ENCODE measurements at regions of chr2 and their contacts with region 1.

Region 1: DNA sequence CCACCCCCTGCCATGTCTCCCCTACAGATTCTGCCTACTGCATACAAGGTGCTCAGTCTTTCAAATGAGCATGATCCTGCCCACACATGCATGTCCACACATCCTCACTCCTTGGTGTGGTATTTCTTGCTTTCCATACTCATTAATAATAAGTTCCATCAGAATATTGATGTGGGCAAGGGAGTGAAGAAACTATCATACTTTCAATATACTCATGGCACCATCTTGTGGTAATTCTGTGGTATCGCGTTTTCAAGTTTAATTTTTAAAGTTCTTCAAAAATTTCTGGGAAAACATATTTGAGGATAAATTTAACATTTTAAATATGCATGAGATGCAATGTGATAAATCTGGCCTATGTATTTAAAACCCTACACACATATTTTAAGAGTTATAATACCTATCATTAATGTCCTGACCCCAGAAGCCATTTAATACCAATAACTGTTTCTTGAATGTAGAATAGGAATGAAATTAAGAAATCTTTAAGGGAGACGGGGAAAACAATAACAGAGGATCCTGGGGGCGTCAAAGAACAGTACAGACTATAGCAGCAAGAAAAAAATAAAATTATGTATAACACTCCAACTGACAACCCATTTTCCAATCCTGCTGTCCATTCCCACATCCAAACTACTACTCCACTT is 110.1 kb downstream of the ZNF385B start:
- DNase-seq: peak; percentile 18
- ATAC-seq: 0 out of 2 replicates have a peak, but pooled peaks have one; percentile 46
- H3K4me3 ChIP-seq: no peak overlapping the region
- H3K27ac ChIP-seq: no peak overlapping the region
- H3K4me1 ChIP-seq: no peaks in the 10 kb centered on the region
- H3K27me3 ChIP-seq: no peaks in the 10 kb centered on the region
- CTCF ChIP-seq: peak; percentile 42 to 82 (median 78); a peak in 5 of 6 replicates
- POLR2A ChIP-seq: no peak
- RAD21 ChIP-seq: peak; percentile 88

Region 2: DNA sequence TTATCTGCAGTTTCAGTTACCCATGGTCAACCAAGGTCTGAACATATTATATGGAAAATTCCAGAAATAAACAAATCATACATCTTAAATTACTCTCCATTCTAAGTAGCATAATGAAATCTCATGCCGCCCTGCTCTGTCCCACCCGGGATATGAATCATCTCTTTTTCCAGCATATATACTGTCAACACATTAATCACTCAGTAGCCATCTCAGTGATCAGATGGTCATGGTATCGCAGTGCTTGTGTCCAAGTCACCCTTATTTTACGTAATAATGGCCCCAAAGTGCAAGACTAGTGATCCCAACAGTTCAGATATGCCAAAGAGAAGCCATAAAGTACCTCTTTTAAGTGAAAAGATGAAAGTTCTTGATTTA is 1513.2 kb before region 1 on chr2:
- CTCF ChIA-PET with region 1: no interaction called
- POLR2A ChIA-PET with region 1: no interaction called
- RAD21 ChIA-PET with region 1: no interaction called
- intact Hi-C with region 1: no loop called
- DNase-seq: no peak
- ATAC-seq: no peak
- H3K4me3 ChIP-seq: no peak overlapping the region
- H3K27ac ChIP-seq: no peak overlapping the region
- H3K4me1 ChIP-seq: peaks cover 5 to 10% of the 10 kb centered on the region in 2 experiments; a peak in 3 of 4 replicates
- H3K27me3 ChIP-seq: no peaks in the 10 kb centered on the region
- CTCF ChIP-seq: no peak
- POLR2A ChIP-seq: no peak
- RAD21 ChIP-seq: no peak

Region 3: GRCh38 chr2:178761759-178762371 is 989.4 kb before region 1 on chr2:
- CTCF ChIA-PET with region 1: no interaction called
- POLR2A ChIA-PET with region 1: no interaction called
- RAD21 ChIA-PET with region 1: no interaction called
- intact Hi-C with region 1: loop called (anchors 10 kb)
- DNase-seq: peak; percentile 42
- ATAC-seq: peak; percentile 76
- H3K4me3 ChIP-seq: no peak overlapping the region
- H3K27ac ChIP-seq: no peak overlapping the region
- H3K4me1 ChIP-seq: no peaks in the 10 kb centered on the region
- H3K27me3 ChIP-seq: peaks cover 35% of the 10 kb centered on the region; the same call in 1 of the 2 replicates
- CTCF ChIP-seq: peak; percentile 63 to 81 (median 66); a peak in 5 of 6 replicates
- POLR2A ChIP-seq: no peak
- RAD21 ChIP-seq: peak; percentile 87

Region 4: DNA sequence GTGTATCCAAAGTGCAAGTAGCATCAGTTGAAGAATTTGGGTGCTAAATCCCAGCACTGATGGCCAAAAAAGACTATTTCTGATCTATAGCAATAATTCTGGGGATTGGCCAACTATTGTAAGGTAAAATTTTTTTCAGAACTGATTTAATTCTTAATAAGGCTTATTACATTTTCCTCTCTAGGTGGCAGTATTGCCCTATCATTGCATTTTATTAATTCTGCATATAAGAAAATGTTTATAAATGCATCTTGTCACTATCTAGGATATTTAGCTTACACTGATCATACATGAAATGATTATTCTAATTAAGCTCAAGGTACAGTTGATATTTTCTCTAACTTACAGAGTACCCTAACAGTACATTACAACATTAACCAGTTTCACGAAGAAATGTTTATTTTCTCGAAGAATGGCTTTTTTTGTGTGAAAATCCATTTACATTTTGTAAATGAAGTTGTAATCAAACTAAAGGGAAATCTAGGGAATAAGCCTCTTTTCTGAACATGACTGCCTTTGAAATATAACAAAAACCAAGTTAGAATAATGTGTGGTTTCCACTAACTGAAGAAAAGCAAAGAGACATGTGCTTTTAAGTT is 955.1 kb before region 1 on chr2:
- CTCF ChIA-PET with region 1: no interaction called
- POLR2A ChIA-PET with region 1: no interaction called
- RAD21 ChIA-PET with region 1: no interaction called
- intact Hi-C with region 1: loop called (anchors 1 kb)
- DNase-seq: peak; percentile 22
- ATAC-seq: no peak
- H3K4me3 ChIP-seq: no peak overlapping the region
- H3K27ac ChIP-seq: no peak overlapping the region
- H3K4me1 ChIP-seq: no peaks in the 10 kb centered on the region
- H3K27me3 ChIP-seq: 0 out of 2 replicates have a peak, but pooled peaks cover 5% of the 10 kb centered on the region
- CTCF ChIP-seq: peak; percentile 29 to 73 (median 70); a peak in 5 of 6 replicates
- POLR2A ChIP-seq: no peak
- RAD21 ChIP-seq: peak; percentile 85

Region 5: DNA sequence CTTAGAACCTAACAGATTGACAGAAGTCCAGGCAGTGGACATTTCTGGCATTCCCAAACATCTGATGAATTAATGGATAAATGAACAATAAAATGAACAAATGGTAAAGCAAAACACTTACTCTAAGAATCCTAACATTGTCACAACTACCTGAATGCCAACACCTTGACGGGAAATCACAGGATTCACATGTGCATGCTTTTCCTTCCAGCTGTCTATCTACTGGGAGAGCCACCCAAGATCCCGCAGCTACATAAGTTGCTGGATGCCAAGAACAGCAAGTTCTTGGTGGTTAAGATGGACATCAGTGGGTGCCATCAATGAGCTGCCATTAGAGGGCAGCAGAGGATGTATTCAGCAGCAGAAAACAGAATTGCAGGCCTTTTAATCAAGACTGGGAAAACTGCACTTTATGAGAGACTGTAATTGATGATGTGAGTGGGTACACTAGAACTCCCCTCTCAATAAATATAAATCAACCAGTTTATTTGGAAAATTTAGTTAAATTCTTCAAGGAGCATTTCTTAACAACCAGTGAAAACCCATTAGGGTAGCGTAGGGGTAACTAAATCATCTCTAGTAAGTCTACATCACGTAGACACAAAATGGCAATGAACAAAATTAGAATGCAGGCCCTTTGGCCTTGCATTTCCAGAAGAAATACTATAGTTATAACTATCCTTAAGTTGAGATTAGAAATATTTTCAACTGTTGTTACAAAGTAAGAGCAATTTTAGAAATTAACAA is 532.3 kb before region 1 on chr2:
- CTCF ChIA-PET with region 1: no interaction called
- POLR2A ChIA-PET with region 1: no interaction called
- RAD21 ChIA-PET with region 1: no interaction called
- intact Hi-C with region 1: loop called (anchors 2 kb)
- DNase-seq: peak; percentile 67
- ATAC-seq: peak; percentile 91
- H3K4me3 ChIP-seq: no peak overlapping the region
- H3K27ac ChIP-seq: no peak overlapping the region
- H3K4me1 ChIP-seq: peaks cover 0 to 3% of the 10 kb centered on the region in 2 experiments; a peak in 1 of 4 replicates
- H3K27me3 ChIP-seq: no peaks in the 10 kb centered on the region
- CTCF ChIP-seq: peak; percentile 77 to 91 (median 90)
- POLR2A ChIP-seq: no peak
- RAD21 ChIP-seq: peak; percentile 91

Region 6: DNA sequence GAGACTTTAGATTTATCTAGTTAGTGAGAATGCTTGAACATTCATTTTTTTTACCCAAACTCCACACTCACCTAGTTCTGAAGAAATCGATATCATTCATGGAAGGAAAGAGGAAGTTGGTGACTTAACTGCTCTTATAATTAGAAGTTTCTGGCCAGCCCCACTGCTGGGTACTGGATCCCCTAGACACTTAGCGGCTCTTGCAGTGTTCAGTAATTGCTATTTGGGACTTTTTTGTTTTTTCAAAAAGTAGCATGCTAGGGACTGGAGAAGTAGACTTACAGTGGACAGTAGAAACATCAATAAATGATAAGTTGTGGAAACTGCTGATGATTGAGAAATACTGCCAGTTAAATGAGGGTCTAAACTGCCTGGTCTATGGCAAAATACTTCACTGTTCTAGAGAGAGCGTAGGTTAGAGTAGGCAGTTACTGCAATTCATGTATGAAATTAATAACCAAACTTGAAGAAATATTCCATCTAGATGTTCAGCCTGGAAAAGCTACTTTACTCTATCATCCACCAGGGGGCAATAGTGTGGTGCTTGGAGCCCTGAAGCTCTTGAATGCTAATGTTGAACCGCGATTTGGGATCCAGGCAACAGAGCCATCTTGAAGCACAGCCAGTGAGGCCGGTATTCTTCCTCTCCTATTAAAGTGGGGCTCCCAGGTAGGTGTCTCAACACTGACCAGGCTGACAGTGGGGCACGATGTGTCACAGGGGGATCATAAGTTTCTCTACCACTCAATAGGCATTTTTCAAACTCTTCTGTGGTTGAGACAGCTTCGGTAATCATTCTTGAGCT is 340.5 kb before region 1 on chr2:
- CTCF ChIA-PET with region 1: interaction called, 6 read pairs
- POLR2A ChIA-PET with region 1: no interaction called
- RAD21 ChIA-PET with region 1: no interaction called
- intact Hi-C with region 1: loop called (anchors 1 kb)
- DNase-seq: peak; percentile 60
- ATAC-seq: peak; percentile 96
- H3K4me3 ChIP-seq: no peak overlapping the region
- H3K27ac ChIP-seq: no peak overlapping the region
- H3K4me1 ChIP-seq: 0 out of 4 replicates have a peak, but pooled peaks cover 0 to 3% of the 10 kb centered on the region in 2 experiments
- H3K27me3 ChIP-seq: no peaks in the 10 kb centered on the region
- CTCF ChIP-seq: peak; percentile 65 to 84 (median 80); a peak in 5 of 6 replicates
- POLR2A ChIP-seq: no peak
- RAD21 ChIP-seq: peak; percentile 72

Region 7: GRCh38 chr2:179422037-179422643 is 329.1 kb before region 1 on chr2:
- CTCF ChIA-PET with region 1: interaction called, 6 read pairs
- POLR2A ChIA-PET with region 1: no interaction called
- RAD21 ChIA-PET with region 1: no interaction called
- intact Hi-C with region 1: loop called (anchors 1 kb)
- DNase-seq: peak; percentile 58
- ATAC-seq: peak; percentile 93
- H3K4me3 ChIP-seq: no peak overlapping the region
- H3K27ac ChIP-seq: no peak overlapping the region
- H3K4me1 ChIP-seq: no peaks in the 10 kb centered on the region
- H3K27me3 ChIP-seq: no peaks in the 10 kb centered on the region
- CTCF ChIP-seq: peak; percentile 76 to 89 (median 86)
- POLR2A ChIP-seq: no peak
- RAD21 ChIP-seq: peak; percentile 87

Region 8: GRCh38 chr2:179686718-179687342 is 64.5 kb before region 1 on chr2:
- CTCF ChIA-PET with region 1: no interaction called
- POLR2A ChIA-PET with region 1: no interaction called
- RAD21 ChIA-PET with region 1: no interaction called
- intact Hi-C with region 1: no loop called
- DNase-seq: no peak
- ATAC-seq: no peak
- H3K4me3 ChIP-seq: no peak overlapping the region
- H3K27ac ChIP-seq: no peak overlapping the region
- H3K4me1 ChIP-seq: no peaks in the 10 kb centered on the region
- H3K27me3 ChIP-seq: no peaks in the 10 kb centered on the region
- CTCF ChIP-seq: no peak
- POLR2A ChIP-seq: no peak
- RAD21 ChIP-seq: no peak

Region 9: DNA sequence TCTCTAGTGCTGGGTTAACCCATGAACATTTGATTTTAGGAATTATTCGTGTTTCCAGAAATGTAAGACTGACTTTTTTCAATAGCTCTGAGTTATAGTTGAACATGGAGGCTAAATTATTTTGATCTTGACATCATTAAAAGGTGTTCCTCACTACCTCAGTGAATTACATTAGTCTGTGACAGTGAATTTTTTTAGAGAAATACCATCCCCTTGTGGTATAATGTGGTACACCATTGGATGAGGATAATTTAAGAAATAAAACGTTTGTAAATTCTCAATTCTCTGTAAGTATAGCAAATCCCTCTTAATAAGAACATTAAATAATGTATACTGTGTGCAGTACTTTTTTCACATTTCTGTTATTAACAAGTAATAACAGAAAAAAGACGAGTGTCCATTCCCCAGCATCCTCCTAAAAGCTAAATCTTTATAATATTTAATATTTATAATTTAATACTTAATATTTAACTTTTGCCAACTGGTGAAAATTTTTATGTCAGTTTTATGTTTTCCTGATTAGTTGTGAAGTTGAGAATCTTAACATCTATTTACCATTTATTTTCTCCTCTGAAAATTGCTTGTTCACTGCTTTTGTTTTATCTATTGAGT is 326.1 kb after region 1 on chr2:
- CTCF ChIA-PET with region 1: no interaction called
- POLR2A ChIA-PET with region 1: no interaction called
- RAD21 ChIA-PET with region 1: no interaction called
- intact Hi-C with region 1: loop called (anchors 10 kb)
- DNase-seq: peak; percentile 15
- ATAC-seq: peak; percentile 69
- H3K4me3 ChIP-seq: no peak overlapping the region
- H3K27ac ChIP-seq: no peak overlapping the region
- H3K4me1 ChIP-seq: no peaks in the 10 kb centered on the region
- H3K27me3 ChIP-seq: no peaks in the 10 kb centered on the region
- CTCF ChIP-seq: peak; percentile 62 to 83 (median 69); a peak in 5 of 6 replicates
- POLR2A ChIP-seq: no peak
- RAD21 ChIP-seq: peak; percentile 80